AG04449 (cell line): ENCODE measurements at regions of chr21 and their contacts with region 1.

Region 1: GRCh38 chr21:29024474-29025327 is at the start of gene USP16:
- DNase-seq: peak; percentile 98
- H3K4me3 ChIP-seq: peak within 1 kb of the TSS; percentile 94
- CTCF ChIP-seq: peak; percentile 18

Region 2: DNA sequence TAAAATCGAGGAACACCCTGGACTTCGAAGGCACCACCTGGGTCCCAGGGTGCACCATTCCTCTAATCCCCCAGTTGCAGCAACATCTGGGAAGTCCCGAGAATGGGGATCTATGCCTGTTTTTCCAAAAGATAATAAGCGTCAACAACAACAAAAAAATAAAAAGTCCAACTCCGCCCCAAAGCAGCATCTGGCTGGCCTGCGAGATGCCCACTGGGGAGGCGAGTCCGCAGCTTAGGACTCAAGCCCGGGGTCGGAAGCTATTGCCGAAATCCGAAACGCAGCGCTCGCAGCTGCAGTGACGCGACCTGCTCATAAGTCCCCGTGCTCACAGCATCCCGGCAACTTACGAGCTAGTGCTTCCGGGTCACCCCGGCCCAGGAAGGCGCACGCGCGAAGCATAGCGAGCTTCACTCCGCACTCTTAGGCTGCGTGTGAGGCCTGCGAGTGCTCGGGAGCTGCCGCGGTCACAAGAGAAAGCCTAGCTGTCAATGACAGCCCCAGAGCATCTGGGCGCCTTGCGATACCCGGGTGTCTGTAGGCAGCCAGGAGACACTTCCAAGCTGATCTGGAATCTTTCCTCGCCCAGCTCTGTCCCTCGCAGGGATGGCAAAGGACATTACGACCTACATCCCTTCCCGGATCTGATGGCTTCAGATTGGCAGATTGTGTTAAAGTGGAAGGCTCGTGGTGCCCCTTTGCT is 22.1 kb before region 1 on chr21:
- CTCF ChIA-PET with region 1: no interaction called
- POLR2A ChIA-PET with region 1: interaction called, 15 read pairs
- DNase-seq: peak; percentile 82
- H3K4me3 ChIP-seq: peak overlapping the region; percentile 74
- CTCF ChIP-seq: no peak

Region 3: GRCh38 chr21:29073222-29074006 is 48.7 kb after region 1 on chr21 and contains the start of gene CCT8:
- CTCF ChIA-PET with region 1: no interaction called
- POLR2A ChIA-PET with region 1: interaction called, 12 read pairs
- DNase-seq: peak; percentile 97
- H3K4me3 ChIP-seq: peak within 1 kb of the TSS; percentile 98
- CTCF ChIP-seq: no peak